Cardiac septum (tissue), 1 donor: ENCODE measurements at regions of chr11 and their contacts with region 1.

Region 1: GRCh38 chr11:6022956-6023355 is 7.6 kb downstream of the OR56A1 start:
- DNase-seq: no peak

Region 2: GRCh38 chr11:6251120-6251733 is 228.3 kb after region 1 on chr11:
- intact Hi-C with region 1: loop called (anchors 5 kb)
- DNase-seq: no peak

Region 3: DNA sequence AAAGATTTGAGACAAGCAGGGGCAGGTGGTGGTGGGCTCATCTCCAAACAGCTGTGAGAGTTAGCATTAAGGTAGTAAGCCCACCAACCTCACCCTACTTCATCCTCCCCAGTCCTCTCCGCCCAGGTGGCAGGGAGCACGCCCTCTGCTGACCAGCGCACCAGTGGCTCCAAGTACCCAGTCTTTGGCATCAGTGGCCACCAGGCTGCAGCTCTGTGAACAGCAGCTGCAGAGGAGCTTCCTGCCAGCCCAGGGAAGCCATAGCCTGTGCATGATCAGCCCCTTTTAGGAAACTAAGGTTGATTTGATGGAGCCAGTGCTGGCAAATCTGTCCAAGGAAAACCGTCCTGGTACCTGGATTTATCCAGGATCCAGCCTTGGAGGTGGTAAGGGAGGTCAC is 275.6 kb after region 1 on chr11:
- intact Hi-C with region 1: loop called (anchors 5 kb)
- DNase-seq: no peak

Region 4: GRCh38 chr11:6362873-6363678 is 340.1 kb after region 1 on chr11:
- intact Hi-C with region 1: loop called (anchors 5 kb)
- DNase-seq: peak; percentile 89